HCT116 (cell line): ENCODE measurements at regions of chr2 and their contacts with region 1.

Region 1: DNA sequence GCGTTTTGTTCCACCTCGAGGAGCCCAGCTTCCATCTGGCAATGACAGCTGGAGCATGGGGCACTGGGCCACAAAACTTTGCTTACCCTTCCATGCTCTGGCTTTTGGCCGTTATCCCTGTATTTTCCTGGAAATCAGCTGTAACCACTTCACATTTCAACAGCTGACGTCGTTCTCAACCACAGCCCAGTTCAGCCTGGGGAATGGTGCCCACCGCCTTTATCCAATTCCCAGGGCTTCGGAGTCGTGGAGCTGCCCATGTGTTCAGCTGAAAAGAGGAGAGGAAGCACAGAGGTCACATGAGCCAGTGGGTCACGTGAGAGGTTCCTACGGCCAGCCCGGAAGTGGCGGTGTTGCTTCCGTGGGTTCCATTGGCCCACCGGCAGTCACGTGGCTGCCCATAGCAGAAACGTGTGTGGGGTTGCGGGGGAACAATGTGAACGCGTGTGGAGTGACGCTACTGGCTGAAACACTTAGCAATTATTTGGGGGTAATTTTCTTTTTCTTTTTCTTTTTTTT is 16.7 kb upstream of the EDAR start:
- DNase-seq: no peak
- ATAC-seq: no peak
- H3K4me3 ChIP-seq: no peak overlapping the region
- H3K27ac ChIP-seq: no peak overlapping the region
- H3K4me1 ChIP-seq: no peaks in the 10 kb centered on the region
- H3K27me3 ChIP-seq: no peaks in the 10 kb centered on the region
- CTCF ChIP-seq: no peak
- POLR2A ChIP-seq: no peak
- RAD21 ChIP-seq: no peak

Region 2: DNA sequence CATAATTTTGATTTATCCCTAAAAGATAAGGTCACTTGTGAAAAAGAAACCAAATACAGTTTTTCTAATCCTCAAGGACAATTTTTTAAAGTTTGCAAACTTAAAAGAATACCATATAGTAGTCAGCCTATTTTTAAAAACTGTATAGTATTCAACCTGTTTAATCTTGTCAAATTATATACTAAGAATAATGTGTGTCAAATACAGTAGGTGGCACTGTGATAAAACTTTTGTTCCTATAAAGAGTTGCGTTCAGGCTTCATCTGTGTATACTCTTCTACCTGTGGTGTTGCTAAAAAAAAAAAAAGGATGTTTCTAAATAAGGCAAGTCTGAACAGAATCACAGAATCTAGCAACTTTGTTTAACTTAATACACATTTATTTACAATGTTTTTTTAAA is 150.6 kb before region 1 on chr2:
- CTCF ChIA-PET with region 1: no interaction called
- POLR2A ChIA-PET with region 1: no interaction called
- RAD21 ChIA-PET with region 1: no interaction called
- intact Hi-C with region 1: no loop called
- DNase-seq: no peak
- ATAC-seq: peak; percentile 74
- H3K4me3 ChIP-seq: no peak overlapping the region
- H3K27ac ChIP-seq: no peak overlapping the region
- H3K4me1 ChIP-seq: no peaks in the 10 kb centered on the region
- H3K27me3 ChIP-seq: no peaks in the 10 kb centered on the region
- CTCF ChIP-seq: peak in 2 of 3 experiments; percentile 46 to 49; a peak in 4 of 6 replicates
- POLR2A ChIP-seq: no peak
- RAD21 ChIP-seq: peak; percentile 66

Region 3: DNA sequence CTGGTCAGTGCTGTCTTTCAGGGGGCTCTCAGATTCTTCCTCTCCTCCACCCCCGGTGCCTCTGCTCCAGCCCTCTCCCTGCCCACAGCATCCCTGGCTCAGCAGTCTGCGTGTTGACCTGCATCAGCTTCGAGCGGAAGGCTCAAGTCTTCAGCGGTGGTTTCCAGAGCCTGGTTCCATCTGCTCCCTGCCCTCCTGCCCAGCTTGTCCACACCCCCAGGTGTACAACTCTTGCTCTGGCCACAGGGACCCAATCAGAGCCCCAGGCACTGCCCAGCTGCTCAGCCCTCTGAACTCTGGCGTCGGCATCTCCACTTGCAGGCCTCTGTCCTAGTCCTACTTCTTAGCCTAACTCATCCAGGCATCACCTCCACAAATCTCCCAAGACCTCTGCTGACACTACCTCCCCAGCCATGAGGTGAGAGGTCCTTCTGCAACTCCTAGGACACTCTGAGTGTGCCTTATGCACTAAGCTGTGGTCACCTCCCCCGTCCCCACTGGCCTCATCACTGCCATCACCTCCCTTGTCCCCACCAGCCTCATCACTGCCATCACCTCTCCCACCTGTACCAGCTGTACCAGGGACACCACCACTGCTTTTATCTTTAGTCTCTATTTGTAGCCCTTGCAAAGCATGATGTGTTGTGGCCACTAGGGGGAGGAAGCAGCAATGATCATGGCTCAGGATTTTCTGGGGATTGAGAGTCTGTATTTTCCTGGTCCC is 77.6 kb before region 1 on chr2:
- CTCF ChIA-PET with region 1: no interaction called
- POLR2A ChIA-PET with region 1: no interaction called
- RAD21 ChIA-PET with region 1: no interaction called
- intact Hi-C with region 1: loop called (anchors 1 kb)
- DNase-seq: peak; percentile 43
- ATAC-seq: peak; percentile 90
- H3K4me3 ChIP-seq: no peak overlapping the region
- H3K27ac ChIP-seq: no peak overlapping the region
- H3K4me1 ChIP-seq: peaks cover 3 to 8% of the 10 kb centered on the region in 2 experiments; a peak in 3 of 4 replicates
- H3K27me3 ChIP-seq: no peaks in the 10 kb centered on the region
- CTCF ChIP-seq: peak; percentile 77 to 90 (median 87); a peak in 5 of 6 replicates
- POLR2A ChIP-seq: no peak
- RAD21 ChIP-seq: peak; percentile 75

Region 4: GRCh38 chr2:108988796-108989713 is 16.7 kb before region 1 on chr2 and contains the start of gene EDAR:
- CTCF ChIA-PET with region 1: no interaction called
- POLR2A ChIA-PET with region 1: no interaction called
- RAD21 ChIA-PET with region 1: no interaction called
- intact Hi-C with region 1: no loop called
- DNase-seq: peak; percentile 57
- ATAC-seq: peak; percentile 99
- H3K4me3 ChIP-seq: peak within 1 kb of the TSS; percentile 18 to 26; a peak in 3 of 4 replicates
- H3K27ac ChIP-seq: no peak within 1 kb of the TSS
- H3K4me1 ChIP-seq: peaks cover 0 to 13% of the 10 kb centered on the region in 2 experiments; a peak in 2 of 4 replicates
- H3K27me3 ChIP-seq: peaks cover 8% of the 10 kb centered on the region; the same call in 1 of the 2 replicates
- CTCF ChIP-seq: peak; percentile 71 to 81 (median 76)
- POLR2A ChIP-seq: no peak
- RAD21 ChIP-seq: peak; percentile 91
- total RNA-seq, gene EDAR: 0.15 TPM

Region 5: GRCh38 chr2:109209412-109209811 is 203.7 kb after region 1 on chr2:
- CTCF ChIA-PET with region 1: no interaction called
- POLR2A ChIA-PET with region 1: no interaction called
- RAD21 ChIA-PET with region 1: interaction called in 1 of 2 experiments, 10 read pairs
- intact Hi-C with region 1: no loop called
- DNase-seq: no peak
- ATAC-seq: no peak
- H3K4me3 ChIP-seq: no peak overlapping the region
- H3K27ac ChIP-seq: no peak overlapping the region
- H3K4me1 ChIP-seq: peaks cover 15 to 22% of the 10 kb centered on the region in 2 experiments; a peak in 3 of 4 replicates
- H3K27me3 ChIP-seq: no peaks in the 10 kb centered on the region; the same call in 1 of the 2 replicates
- CTCF ChIP-seq: no peak
- POLR2A ChIP-seq: no peak
- RAD21 ChIP-seq: no peak